Activated B cell treated with CpG ODN at 0.5 μM for 24 hours (primary cell): ENCODE measurements at regions of chr20 and their contacts with region 1.

Region 1: DNA sequence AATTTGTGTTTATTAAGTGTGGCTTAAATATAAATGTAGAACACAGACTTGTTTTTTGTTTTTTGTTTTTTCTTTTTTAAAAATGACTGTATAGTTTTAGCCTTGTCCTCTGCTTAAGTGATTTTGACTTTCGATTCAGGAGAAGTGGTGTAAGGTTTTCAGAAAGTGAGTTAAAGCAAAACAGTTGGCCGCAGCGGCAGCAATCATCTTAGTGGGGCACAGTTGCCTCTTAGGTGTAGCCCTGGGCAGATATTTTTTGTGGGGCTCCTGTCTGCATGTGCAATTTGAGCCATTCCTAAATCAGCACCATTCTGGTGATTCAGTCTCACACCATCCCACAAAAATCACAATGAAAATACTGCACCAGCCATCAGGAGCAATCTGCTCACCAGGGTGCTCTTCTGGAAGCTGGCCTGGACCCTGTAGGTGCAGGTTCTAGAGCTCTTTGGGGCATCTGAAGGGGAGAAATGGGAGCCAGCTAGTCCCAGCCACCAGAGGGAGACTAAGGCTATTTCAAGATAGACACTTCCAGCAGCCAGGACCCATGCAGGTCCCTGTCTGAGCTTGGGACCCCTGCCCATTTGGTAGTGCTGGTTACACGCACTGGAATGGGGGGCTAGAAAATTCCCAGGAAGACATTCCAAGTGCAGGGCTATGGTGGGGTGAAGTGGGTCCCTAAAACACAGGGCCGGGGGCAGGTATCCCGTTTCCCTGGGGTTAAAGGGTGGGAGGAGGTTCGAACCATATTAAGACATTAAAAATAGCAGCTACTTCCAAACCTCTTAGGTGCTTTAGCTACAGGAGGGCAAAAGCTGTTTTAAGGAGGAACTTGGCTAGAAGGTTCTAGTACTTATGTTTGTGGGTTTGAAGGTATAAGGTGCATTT is 156.6 kb downstream of the NFATC2 start:
- DNase-seq: no peak
- ATAC-seq: peak; percentile 65
- H3K4me3 Mint-ChIP-seq: no peak overlapping the region
- H3K27ac Mint-ChIP-seq: peak overlapping the region; percentile 62
- H3K4me1 Mint-ChIP-seq: peaks cover 42% of the 10 kb centered on the region
- H3K27me3 Mint-ChIP-seq: no peaks in the 10 kb centered on the region
- CTCF ChIP-seq: no peak

Region 2: DNA sequence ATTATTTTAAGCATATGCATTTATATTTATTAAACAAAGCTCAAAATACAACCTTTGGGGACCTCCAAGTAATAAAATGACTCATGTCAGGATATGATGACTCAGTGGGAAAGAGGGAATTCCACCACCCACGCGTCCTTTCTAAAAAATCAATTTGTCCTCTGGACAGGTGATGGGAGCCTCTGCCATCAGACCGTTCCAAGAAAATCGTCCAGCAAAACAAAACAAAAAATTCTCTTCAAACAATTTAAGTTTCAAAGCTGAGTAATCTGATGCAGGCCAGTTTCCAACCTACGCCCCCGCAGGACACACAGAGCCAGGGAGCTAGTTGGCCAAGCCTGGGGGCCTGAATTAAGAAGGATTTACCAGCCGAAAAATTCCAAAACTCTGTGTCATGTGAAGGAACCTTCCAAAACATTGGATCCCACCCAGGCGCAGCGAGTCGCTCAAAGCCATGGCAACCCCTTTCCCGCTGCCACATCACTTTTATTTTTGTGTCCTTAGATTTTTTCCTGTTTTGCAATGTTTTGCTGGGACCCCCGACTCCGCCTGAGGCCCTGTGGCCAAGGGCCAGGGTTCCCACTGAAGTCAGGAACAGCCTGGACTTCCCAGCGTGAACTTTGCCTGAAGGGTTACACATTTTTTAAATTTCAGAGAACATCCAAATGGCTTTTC is 61.3 kb after region 1 on chr20:
- CTCF ChIA-PET with region 1: no interaction called
- POLR2A ChIA-PET with region 1: no interaction called
- intact Hi-C with region 1: no loop called
- DNase-seq: no peak
- ATAC-seq: no peak
- H3K4me3 Mint-ChIP-seq: no peak overlapping the region
- H3K27ac Mint-ChIP-seq: no peak overlapping the region
- H3K4me1 Mint-ChIP-seq: peaks cover 14% of the 10 kb centered on the region
- H3K27me3 Mint-ChIP-seq: no peaks in the 10 kb centered on the region
- CTCF ChIP-seq: no peak

Region 3: GRCh38 chr20:51562332-51563155 is 176.7 kb after region 1 on chr20:
- CTCF ChIA-PET with region 1: interaction called, 12 read pairs
- POLR2A ChIA-PET with region 1: no interaction called
- intact Hi-C with region 1: no loop called
- DNase-seq: peak; percentile 28
- ATAC-seq: peak; percentile 25
- H3K4me3 Mint-ChIP-seq: peak overlapping the region; percentile 67
- H3K27ac Mint-ChIP-seq: no peak overlapping the region
- H3K4me1 Mint-ChIP-seq: peaks cover 26% of the 10 kb centered on the region
- H3K27me3 Mint-ChIP-seq: peaks cover 56% of the 10 kb centered on the region
- CTCF ChIP-seq: no peak

Region 4: GRCh38 chr20:51811042-51811355 is 425.1 kb after region 1 on chr20:
- CTCF ChIA-PET with region 1: no interaction called
- POLR2A ChIA-PET with region 1: no interaction called
- intact Hi-C with region 1: no loop called
- DNase-seq: no peak
- ATAC-seq: no peak
- H3K4me3 Mint-ChIP-seq: no peak overlapping the region
- H3K27ac Mint-ChIP-seq: no peak overlapping the region
- H3K4me1 Mint-ChIP-seq: no peaks in the 10 kb centered on the region
- H3K27me3 Mint-ChIP-seq: peaks cover 6% of the 10 kb centered on the region
- CTCF ChIP-seq: no peak

Region 5: GRCh38 chr20:51934301-51935002 is 548.6 kb after region 1 on chr20:
- CTCF ChIA-PET with region 1: no interaction called
- POLR2A ChIA-PET with region 1: no interaction called
- intact Hi-C with region 1: no loop called
- DNase-seq: no peak
- ATAC-seq: no peak
- H3K4me3 Mint-ChIP-seq: no peak overlapping the region
- H3K27ac Mint-ChIP-seq: no peak overlapping the region
- H3K4me1 Mint-ChIP-seq: no peaks in the 10 kb centered on the region
- H3K27me3 Mint-ChIP-seq: no peaks in the 10 kb centered on the region
- CTCF ChIP-seq: no peak